ENCODE measurements at regions of chr6 and their contacts with region 1.

Region 1: DNA sequence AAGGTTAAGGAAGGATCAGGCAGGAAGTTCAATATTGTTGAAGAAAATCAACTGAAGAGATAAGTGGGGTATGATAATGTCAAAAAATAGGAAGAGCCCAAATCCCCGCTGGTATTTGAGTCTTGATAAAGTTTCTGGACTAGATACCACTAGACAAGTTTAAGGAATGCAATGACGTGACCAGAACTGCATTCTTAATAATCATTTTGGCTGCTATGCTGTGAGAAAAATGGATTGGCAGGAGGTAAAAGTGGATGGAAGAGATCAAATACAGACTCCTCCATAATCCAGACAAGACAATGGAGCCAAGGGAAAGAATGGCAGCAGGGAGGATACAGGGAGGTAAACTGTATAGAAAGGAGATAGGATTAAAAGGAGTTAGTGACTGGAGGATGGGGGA is 128.2 kb downstream of the COL12A1 start:
- DNase-seq: no peak
- ATAC-seq: no peak

Region 2: DNA sequence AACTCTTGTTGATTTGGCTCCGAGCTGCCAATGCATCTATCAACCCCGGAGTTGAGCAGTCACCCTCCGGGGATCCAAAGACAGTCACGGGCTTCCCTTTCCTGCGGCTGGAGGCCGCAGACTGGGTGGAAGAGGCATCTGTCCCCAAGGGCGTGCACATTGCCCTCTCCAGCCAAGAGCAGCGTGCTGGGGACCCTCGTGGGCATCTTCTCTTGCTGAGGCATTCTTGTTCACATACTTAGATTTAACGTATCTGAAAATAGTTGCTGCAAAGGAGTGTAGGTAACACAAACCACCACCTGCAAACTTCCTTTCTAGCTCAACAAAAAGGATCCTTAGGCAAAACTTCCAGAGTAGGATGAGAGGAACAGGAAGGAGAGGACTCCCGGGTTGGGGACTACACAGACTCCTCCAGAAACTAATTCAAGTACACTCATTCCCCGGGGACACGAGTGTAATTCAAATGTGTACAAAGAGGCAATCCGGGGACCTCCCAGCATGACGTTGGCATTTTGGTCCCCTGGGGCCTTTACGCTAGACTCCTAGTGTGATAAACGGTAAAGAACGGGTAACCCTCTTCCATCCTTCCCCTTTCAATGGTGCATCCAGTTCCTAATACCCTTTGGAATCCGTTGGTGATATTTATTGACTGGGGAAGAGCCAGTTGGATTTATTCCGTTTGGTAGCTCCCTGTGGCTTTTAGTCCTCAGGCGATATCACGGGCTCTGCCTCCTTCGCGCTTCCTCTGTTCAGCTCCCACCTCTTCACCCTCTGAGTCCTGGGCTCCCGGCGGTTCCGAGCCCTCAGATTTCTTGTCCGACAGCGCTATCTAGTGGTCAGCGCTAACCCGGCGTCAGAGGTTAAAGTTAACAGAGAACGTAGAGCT is 130.8 kb after region 1 on chr6:
- intact Hi-C with region 1: no loop called
- DNase-seq: peak; percentile 94
- ATAC-seq: peak; percentile 63

Region 3: DNA sequence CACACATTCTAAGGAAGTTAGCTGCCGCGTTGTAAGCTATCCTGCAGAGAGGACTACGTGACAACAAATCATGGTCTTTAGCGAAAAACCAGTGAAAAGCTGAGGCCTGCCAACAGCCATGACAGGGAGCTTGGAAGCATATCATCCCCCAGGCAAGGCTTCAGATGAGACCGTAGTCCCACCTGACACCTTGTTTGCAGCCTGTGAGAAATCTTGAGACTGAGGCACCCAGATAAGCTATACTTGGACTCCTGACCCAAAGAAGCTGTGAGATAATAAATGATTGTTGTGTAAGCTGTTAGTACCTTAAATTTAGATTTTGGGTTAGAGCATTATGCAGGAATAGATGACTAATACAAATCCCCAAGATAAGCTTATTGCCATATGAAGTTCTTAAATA is 478.5 kb after region 1 on chr6:
- intact Hi-C with region 1: loop called (anchors 5 kb)
- DNase-seq: no peak
- ATAC-seq: no peak

Measured in sciatic nerve (tissue), 2 donors.